Left cardiac atrium (tissue), 4 donors: ENCODE measurements at regions of chr1 and their contacts with region 1.

Region 1: DNA sequence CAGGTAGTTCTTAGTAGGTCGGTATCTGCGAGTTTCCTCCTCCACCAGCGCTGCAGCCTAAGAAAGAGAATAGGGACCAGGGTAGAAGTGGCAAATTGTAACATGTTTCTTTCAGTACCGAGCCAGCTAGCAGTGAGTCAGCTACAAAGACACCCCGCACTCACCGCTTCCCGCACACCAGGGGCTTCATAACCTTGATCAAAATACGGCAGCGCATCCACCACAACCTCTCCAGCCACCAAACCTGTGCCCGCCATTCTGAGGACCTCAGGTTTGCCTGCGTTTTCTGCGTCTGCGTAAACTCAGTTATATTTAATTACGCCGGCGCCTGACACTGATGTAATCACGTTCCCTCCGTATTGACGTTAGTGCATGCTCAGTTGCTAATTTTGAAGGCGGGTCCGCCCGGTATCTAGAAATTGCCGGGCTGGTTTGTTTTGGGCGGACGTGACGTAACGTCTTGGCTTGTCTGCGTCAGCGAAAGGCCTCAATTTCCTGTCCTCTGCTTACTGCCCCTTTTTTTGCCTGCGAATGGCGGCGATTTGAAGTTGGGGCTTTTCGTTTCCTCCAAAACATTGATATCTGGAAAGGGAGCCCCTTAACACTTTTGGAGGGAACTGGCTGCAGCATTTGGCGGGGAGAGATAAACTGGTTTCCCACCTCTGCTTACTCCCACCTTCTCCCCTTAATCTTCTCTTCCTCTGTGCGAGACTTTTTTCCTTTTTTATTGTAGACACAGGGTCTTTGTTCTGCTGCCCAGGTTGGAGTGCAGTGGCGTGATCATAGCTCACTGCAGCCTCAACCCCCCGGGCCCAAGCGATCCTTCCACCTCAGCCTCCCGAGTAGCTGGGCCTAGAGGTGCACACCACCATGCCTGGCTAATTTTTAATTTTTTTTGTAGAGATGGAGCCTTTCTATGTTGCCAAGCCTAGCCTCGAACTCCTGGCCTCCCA is at the start of gene BCAS2:
- DNase-seq: peak; percentile 97
- ATAC-seq: peak; percentile 99 to 100
- total RNA-seq, gene BCAS2: 25.8 to 34.7 TPM

Region 2: GRCh38 chr1:113978863-113979702 is 602.5 kb before region 1 on chr1 and contains the start of gene OLFML3:
- intact Hi-C with region 1: no loop called
- DNase-seq: peak; percentile 90
- ATAC-seq: peak; percentile 68 to 82
- total RNA-seq, gene OLFML3: 18.8 to 36.2 TPM

Region 3: GRCh38 chr1:114669562-114670082 is 88.0 kb after region 1 on chr1 and contains the start of gene DENND2C:
- intact Hi-C with region 1: loop called in 1 of 2 experiments (anchors 10 kb)
- DNase-seq: no peak
- ATAC-seq: peak; percentile 53 to 78
- total RNA-seq, gene DENND2C: 2.3 to 3.1 TPM

Region 4: GRCh38 chr1:114757455-114758250 is 176.0 kb after region 1 on chr1 and contains the start of gene CSDE1:
- intact Hi-C with region 1: loop called in 1 of 2 experiments (anchors 10 kb)
- DNase-seq: peak; percentile 98
- ATAC-seq: peak; percentile 98
- total RNA-seq, gene CSDE1: 622 to 652 TPM